Activated B cell treated with CpG ODN at 0.5 μM for 24 hours (primary cell): ENCODE measurements at regions of chr22 and their contacts with region 1.

Region 1: DNA sequence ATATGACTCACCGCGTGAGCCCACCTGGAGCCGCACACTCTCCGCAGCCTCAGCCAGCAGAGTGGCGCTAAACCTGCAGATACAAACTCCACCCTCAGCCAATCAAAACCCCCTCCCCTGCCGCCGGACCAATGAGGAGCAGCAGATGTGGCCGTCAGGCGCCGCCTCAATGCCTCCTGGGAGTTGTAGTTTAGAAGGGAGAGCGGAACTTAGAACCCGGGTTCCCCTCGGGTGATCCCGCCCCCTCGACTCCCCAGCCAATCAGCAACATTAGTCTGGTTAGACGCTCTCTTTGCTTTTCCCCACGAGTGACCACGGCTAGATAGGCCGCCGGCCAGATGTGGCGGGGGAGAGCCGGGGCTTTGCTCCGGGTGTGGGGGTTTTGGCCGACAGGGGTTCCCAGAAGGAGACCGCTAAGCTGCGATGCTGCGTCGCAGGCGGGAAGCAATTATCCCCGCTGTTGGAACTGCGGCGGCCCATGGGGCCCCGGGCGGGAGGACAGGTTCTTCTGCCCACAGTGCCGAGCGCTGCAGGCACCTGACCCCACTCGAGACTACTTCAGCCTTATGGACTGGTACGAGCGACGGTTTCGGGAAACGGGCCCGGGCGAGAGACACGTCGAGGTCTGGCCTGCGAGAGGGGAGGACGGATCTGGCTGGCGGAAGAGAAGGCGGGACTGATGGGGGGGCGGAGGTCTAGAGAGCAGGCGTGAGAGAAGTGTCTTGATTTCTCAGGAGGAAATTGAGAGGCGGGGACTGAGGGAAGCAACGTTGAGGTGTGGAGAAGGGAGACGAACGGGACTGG is at the starts of genes CHEK2 and HSCB:
- DNase-seq: peak; percentile 85
- ATAC-seq: peak; percentile 91
- H3K4me3 Mint-ChIP-seq: peak within 1 kb of the TSS; percentile 88
- H3K27ac Mint-ChIP-seq: peak within 1 kb of the TSS; percentile 85
- H3K4me1 Mint-ChIP-seq: peaks cover 30% of the 10 kb centered on the region
- H3K27me3 Mint-ChIP-seq: no peaks in the 10 kb centered on the region
- CTCF ChIP-seq: no peak
- total RNA-seq, gene CHEK2: 13.5 and 14.9 TPM in 2 replicates
- total RNA-seq, gene HSCB: 16.0 and 17.0 TPM in 2 replicates

Region 2: GRCh38 chr22:28674121-28674563 is 67.8 kb before region 1 on chr22:
- CTCF ChIA-PET with region 1: no interaction called
- POLR2A ChIA-PET with region 1: no interaction called
- intact Hi-C with region 1: loop called (anchors 1 kb)
- DNase-seq: no peak
- ATAC-seq: peak; percentile 71
- H3K4me3 Mint-ChIP-seq: peak overlapping the region; percentile 68
- H3K27ac Mint-ChIP-seq: peak overlapping the region; percentile 91
- H3K4me1 Mint-ChIP-seq: peaks cover 30% of the 10 kb centered on the region
- H3K27me3 Mint-ChIP-seq: peaks cover 28% of the 10 kb centered on the region
- CTCF ChIP-seq: no peak

Region 3: DNA sequence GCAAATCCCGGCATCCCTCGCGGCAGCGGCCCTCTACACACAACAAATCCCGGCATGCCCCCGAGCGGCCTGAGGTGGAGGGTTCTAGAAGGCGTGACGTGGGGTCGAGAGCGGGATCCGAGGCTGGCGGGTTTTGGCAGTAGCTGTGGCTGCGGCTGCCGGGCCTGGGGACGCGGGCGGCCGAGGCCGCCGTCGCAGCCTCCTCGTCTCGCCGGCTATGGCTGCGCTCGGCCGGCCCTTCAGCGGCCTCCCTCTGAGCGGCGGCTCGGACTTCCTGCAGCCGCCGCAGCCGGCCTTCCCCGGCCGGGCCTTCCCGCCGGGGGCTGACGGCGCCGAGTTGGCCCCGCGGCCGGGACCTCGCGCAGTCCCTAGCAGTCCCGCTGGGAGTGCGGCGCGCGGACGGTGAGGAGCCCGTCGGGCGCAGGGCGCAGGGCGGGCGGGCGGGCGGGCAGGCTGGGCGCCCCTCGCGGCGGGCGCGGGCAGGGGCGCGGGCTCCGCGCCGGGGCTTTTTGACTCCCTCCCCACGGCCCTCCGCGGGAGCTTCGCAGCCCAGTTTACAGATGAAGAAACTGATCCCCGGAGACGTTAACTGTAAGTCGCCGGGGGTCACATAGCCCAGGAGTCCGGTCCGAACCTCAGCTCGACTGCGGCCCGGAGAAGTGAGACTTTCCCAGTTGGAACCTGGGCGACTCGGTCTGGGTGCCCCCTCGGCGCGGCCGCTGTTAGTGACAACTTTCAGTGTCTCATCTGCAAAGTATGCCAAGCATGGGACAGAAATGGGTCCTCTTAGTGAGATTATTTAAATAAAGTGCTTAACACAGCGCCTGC is 30.9 kb after region 1 on chr22 and contains the start of gene CCDC117:
- CTCF ChIA-PET with region 1: interaction called, 3 read pairs
- POLR2A ChIA-PET with region 1: interaction called, 23 read pairs
- intact Hi-C with region 1: loop called (anchors 1 kb)
- DNase-seq: peak; percentile 87
- ATAC-seq: peak; percentile 91
- H3K4me3 Mint-ChIP-seq: peak within 1 kb of the TSS; percentile 91
- H3K27ac Mint-ChIP-seq: peak within 1 kb of the TSS; percentile 91
- H3K4me1 Mint-ChIP-seq: peaks cover 28% of the 10 kb centered on the region
- H3K27me3 Mint-ChIP-seq: no peaks in the 10 kb centered on the region
- CTCF ChIP-seq: no peak
- total RNA-seq, gene CCDC117: 16.3 and 21.9 TPM in 2 replicates

Region 4: DNA sequence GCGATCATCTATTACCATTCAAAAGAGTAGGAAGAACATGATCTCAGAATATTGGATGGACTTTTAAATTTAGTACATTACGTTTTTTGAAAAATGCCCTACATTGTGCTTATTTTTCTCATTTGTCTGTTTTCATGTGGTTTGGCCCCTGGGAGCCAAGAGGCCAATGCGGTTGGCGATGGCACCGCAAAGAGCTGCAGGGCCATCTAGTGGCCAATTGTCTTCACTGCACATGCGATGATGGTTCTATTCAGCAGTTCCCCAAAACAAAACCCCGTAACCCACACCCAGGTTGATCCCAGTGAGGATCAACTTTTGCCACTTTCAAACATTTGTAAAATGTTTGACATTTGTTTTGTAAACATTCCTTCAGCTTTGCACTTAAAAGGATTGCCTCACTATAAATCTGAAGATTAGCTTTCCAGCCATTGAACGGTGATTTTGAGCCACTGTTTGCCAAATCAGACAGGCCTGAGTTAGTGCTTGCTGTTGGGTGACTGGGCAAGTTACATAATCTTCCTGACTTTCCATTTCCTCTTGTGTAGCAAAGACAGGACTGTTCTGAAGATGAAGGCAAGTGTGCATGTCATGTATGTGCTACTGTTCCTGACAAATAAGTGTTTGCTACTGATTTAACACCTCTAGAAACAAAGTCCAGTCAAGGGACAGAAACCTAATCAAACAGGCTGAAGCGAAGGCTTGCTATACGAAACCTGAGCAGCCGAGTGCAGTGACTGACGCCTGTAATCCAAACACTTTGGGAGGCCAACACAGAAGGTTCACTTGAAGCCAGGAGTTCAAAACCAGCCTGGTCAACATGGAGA is 87.6 kb after region 1 on chr22:
- CTCF ChIA-PET with region 1: no interaction called
- POLR2A ChIA-PET with region 1: no interaction called
- intact Hi-C with region 1: loop called (anchors 1 kb)
- DNase-seq: peak; percentile 51
- ATAC-seq: peak; percentile 80
- H3K4me3 Mint-ChIP-seq: no peak overlapping the region
- H3K27ac Mint-ChIP-seq: no peak overlapping the region
- H3K4me1 Mint-ChIP-seq: peaks cover 5% of the 10 kb centered on the region
- H3K27me3 Mint-ChIP-seq: no peaks in the 10 kb centered on the region
- CTCF ChIP-seq: peak; percentile 89

Region 5: GRCh38 chr22:29072193-29072978 is 330.4 kb after region 1 on chr22:
- CTCF ChIA-PET with region 1: no interaction called
- POLR2A ChIA-PET with region 1: no interaction called
- intact Hi-C with region 1: loop called (anchors 5 kb)
- DNase-seq: peak; percentile 76
- ATAC-seq: peak; percentile 99
- H3K4me3 Mint-ChIP-seq: peak overlapping the region; percentile 72
- H3K27ac Mint-ChIP-seq: no peak overlapping the region
- H3K4me1 Mint-ChIP-seq: peaks cover 25% of the 10 kb centered on the region
- H3K27me3 Mint-ChIP-seq: peaks cover 59% of the 10 kb centered on the region
- CTCF ChIP-seq: no peak